Cardiac septum (tissue), 1 donor: ENCODE measurements at regions of chr2 and their contacts with region 1.

Region 1: DNA sequence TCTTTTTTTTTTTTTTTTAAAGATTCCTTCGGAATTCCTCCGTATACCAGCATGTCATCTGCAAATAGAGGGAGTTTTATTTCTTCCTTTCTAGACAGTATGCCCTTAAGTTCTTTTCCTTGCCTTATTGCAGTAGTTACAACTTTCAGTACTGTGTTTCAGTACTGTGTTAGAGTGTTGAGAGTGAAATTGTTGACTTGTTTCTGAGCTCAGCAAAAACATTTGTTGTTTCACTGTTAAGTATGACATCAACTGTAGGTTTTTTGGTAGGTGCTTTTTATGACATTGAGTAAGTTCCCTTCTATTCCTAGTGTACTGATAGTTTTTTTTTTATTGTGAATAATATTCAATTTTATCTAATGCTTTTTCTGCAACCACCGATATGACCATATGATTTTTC is 43.9 kb downstream of the ACVR2A start:
- DNase-seq: no peak

Region 2: GRCh38 chr2:147843864-147844696 is 44.6 kb before region 1 on chr2:
- intact Hi-C with region 1: loop called (anchors 5 kb)
- DNase-seq: peak; percentile 94